Left cardiac atrium (tissue), 4 donors: ENCODE measurements at regions of chr12 and their contacts with region 1.

Region 1: GRCh38 chr12:4030929-4031702 is 157.9 kb upstream of the PARP11 start:
- DNase-seq: peak; percentile 90
- ATAC-seq: peak; percentile 99

Region 2: GRCh38 chr12:3896801-3897331 is 134.2 kb before region 1 on chr12:
- intact Hi-C with region 1: loop called in 1 of 2 experiments (anchors 10 kb)
- DNase-seq: no peak
- ATAC-seq: peak in 1 of 2 donors; percentile 85